Spleen (tissue), 13 donors: ENCODE measurements at regions of chr15 and their contacts with region 1.

Region 1: GRCh38 chr15:71437404-71438318 is 322.4 kb downstream of the THSD4 start:
- DNase-seq: no peak
- H3K4me3 ChIP-seq: no peak overlapping the region
- H3K27ac ChIP-seq: no peak overlapping the region
- H3K4me1 ChIP-seq: peaks cover 0 to 4% (median 0%) of the 10 kb centered on the region in 6 donors
- H3K27me3 ChIP-seq: peaks cover 0 to 3% (median 0%) of the 10 kb centered on the region in 7 donors
- CTCF ChIP-seq: no peak
- POLR2A ChIP-seq: no peak

Region 2: DNA sequence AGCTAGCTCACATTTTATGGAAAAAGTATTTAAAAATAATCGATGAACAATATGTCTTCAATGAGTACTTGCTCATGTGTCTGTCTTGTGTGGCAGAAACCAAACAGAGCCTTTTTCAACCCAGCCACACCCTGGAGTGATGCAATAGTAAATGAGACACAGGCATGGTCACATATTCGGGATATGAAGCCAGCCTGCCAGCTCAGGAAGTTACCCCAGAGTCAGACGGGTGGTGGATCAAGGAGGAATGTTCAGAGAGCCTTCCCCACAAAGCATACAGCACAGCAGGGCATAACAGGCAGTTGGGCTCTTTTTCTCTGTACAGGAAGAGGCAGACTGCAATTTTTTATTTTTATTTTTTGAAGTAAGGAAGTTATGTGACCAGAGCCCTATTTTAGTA is 611.0 kb before region 1 on chr15:
- intact Hi-C with region 1: loop called (anchors 10 kb)
- DNase-seq: no peak
- H3K4me3 ChIP-seq: no peak overlapping the region
- H3K27ac ChIP-seq: no peak overlapping the region
- H3K4me1 ChIP-seq: peaks cover 0 to 4% (median 2%) of the 10 kb centered on the region in 6 donors
- H3K27me3 ChIP-seq: peaks cover 0 to 18% (median 0%) of the 10 kb centered on the region in 7 donors
- CTCF ChIP-seq: no peak
- POLR2A ChIP-seq: no peak

Region 3: DNA sequence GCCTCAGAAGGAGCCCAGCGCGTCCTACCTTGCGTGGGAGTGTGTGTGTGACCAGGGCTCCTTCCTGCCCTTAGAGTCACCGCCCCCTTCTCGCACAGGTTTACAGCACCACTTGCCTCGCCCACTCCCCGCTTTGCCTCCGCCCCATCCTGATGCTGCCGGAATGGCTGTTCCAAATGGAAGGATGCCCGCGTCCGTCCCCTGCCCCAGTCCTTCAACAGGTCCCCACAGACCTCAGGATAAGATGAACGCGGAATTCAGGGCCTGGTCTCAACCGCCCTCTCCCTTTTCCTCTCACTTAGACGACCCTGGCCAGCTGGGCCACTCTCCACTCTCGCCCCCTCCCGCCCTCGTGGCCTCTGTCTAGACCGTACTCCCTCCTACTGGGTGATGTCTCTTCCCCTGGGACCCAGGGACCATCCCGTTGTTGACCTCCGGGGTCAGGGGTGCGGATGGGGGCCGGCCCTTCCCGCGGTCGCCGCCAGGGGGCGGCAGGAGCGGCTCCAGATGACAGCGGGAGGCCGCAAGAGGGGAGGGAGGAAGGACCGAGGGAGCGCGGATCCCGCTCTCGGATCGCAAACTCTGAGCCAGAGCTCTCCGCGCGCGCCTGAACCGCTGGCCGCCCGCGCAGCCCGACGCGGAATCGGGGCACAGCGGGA is 322.6 kb before region 1 on chr15 and contains the start of gene THSD4:
- intact Hi-C with region 1: loop called (anchors 10 kb)
- DNase-seq: peak; percentile 83
- H3K4me3 ChIP-seq: peak within 1 kb of the TSS in 7 of 8 donors; percentile 27 to 72 (median 35)
- H3K27ac ChIP-seq: peak within 1 kb of the TSS in 3 of 8 donors; percentile 7 to 49 (median 38)
- H3K4me1 ChIP-seq: peaks cover 5 to 31% (median 16%) of the 10 kb centered on the region in 6 donors
- H3K27me3 ChIP-seq: peaks cover 0 to 65% (median 28%) of the 10 kb centered on the region in 7 donors
- CTCF ChIP-seq: peak; percentile 54 to 91 (median 81)
- POLR2A ChIP-seq: no peak
- total RNA-seq, gene THSD4: 1.9 to 11.3 (median 4.3) TPM

Region 4: DNA sequence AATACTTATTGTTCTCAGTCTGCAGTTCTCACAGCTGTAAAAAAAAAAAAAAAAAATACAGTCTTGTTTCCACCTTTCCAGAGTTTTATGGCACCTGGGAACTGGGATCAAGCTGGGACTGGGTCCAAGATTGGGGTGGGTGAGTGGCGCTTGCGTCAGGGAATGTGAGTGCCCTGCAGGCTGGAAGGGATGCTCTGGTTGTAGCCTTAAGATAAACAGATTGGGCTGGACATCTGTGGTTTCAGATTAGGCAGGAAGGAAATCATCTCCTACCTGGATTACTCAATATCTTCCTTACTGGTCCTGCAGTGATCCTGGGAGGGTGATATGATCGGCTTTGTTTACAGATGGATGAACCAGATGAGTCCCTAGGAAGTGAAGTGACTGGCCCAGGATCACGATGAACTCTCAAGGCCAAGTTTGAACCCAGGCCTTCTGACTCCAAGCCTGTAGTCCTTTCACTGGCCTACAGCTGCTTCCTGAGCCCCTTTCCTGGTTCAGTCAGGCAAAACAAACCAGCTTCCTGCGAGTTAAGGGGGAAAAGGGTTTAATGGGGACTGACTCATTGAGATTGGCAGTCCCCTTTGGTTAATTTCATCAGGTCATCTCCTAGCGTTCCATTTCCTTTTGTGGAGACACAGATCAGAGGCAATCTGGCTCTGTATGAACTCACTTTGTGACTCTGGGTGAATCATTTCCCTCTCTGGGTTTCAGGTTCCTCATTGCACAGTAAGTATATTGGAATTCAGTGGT is 142.6 kb before region 1 on chr15:
- intact Hi-C with region 1: no loop called
- DNase-seq: no peak
- H3K4me3 ChIP-seq: no peak overlapping the region
- H3K27ac ChIP-seq: no peak overlapping the region
- H3K4me1 ChIP-seq: no peaks in the 10 kb centered on the region
- H3K27me3 ChIP-seq: peaks cover 0 to 4% (median 0%) of the 10 kb centered on the region in 7 donors
- CTCF ChIP-seq: no peak
- POLR2A ChIP-seq: no peak

Region 5: DNA sequence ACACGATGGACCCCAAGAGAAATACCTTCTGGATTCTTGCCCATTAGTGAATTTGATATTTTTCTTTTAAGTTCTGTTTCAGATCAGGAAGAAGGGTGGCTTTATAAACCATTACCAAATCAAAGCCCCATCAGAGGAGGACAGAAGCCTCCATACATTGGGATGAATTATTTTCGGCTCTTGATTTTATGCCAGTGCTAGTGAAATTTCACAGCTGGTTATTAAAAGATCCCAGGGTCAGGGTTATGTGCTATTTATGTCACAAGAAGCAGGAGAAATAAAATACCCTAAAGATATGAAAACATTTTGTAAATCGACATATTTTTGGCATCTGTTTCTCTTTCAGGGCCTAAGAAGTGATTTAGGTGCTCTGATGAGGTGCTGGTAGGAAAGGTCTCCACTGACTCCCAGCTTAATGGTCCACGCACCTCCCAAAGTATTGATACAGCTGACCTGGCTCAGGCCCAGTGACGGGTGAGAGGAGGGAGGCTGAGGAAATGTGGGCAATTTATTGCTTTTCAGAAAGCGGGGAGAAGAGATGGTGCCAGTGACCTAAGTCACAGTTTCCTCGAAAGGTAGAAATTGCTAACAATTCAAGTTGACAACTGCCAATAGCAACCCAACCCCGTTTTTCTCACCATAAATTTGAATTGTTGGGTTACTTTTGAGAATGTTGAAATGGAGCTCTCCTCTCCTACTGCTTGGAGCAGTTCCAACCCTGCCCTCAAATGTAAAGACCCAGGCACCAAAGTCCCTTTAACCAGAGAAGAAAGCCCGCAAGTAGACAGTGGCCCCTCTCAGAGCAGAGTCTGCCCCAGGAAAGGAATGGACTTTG is 57.1 kb after region 1 on chr15:
- intact Hi-C with region 1: no loop called
- DNase-seq: no peak
- H3K4me3 ChIP-seq: no peak overlapping the region
- H3K27ac ChIP-seq: no peak overlapping the region
- H3K4me1 ChIP-seq: no peaks in the 10 kb centered on the region
- H3K27me3 ChIP-seq: peaks cover 0 to 4% (median 0%) of the 10 kb centered on the region in 7 donors
- CTCF ChIP-seq: no peak
- POLR2A ChIP-seq: no peak

Region 6: DNA sequence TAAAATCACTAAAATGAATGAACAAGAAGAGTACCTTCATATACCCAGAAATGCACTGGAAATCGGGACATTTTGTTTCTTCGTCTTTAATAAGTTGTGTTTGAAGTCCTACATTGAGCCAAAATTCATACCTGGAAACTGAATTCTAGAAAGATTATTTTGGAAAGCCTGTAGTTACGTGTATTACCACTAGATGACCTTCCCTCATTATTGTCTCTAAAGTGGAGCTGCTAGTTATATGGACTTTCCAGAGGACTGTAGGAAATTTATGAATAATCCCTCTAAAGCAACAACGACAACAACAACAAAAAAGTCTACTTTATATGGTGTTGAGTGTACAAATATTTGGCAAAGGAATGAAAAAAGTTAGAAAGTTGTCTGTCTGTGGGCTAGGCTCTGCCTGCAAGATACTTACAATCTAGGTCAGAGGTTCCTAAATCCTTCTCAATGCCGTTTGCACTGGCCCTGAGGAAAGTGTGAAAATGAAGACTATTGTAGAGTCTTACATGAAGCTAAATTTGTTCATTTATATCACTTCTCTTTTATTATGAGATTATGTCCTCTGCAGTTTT is 137.9 kb after region 1 on chr15:
- intact Hi-C with region 1: no loop called
- DNase-seq: no peak
- H3K4me3 ChIP-seq: no peak overlapping the region
- H3K27ac ChIP-seq: no peak overlapping the region
- H3K4me1 ChIP-seq: no peaks in the 10 kb centered on the region
- H3K27me3 ChIP-seq: peaks cover 0 to 19% (median 0%) of the 10 kb centered on the region in 7 donors
- CTCF ChIP-seq: peak in 6 of 11 experiments; percentile 10 to 42 (median 30)
- POLR2A ChIP-seq: no peak